Stomach (tissue), 19 donors: ENCODE measurements at regions of chr10 and their contacts with region 1.

Region 1: GRCh38 chr10:114550756-114551635 is 107.1 kb downstream of the ABLIM1 start:
- DNase-seq: peak; percentile 81 to 96
- H3K4me3 ChIP-seq: peak overlapping the region; percentile 32 to 40 (median 34)
- H3K27ac ChIP-seq: peak overlapping the region; percentile 61 to 82 (median 74)
- H3K4me1 ChIP-seq: peaks cover 19 to 42% (median 33%) of the 10 kb centered on the region in 4 donors
- H3K27me3 ChIP-seq: no peaks in the 10 kb centered on the region
- CTCF ChIP-seq: peak in 3 of 7 experiments; percentile 44 to 63 (median 62)
- EP300 ChIP-seq: no peak
- POLR2A ChIP-seq: no peak

Region 2: DNA sequence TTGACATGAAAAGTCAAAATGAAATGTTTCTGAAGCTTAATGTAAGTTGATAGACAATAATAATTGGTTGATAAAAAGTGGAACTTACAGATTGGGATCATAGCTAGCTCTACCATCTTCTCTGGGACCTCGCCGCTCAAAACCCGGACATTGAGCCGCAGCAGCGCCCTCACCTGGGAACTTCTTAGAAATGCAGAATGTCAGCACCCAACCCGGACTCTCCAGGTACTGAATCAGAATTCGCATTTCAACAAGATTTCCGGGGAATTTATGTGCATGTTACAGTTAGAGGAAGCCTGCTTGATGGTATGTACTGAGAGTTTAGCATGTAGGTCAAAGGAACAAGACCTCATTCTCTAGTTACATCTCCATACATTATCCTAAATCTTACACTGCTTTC is 143.8 kb after region 1 on chr10:
- intact Hi-C with region 1: loop called (anchors 10 kb)
- DNase-seq: peak; percentile 42 to 44
- H3K4me3 ChIP-seq: no peak overlapping the region
- H3K27ac ChIP-seq: no peak overlapping the region
- H3K4me1 ChIP-seq: peaks cover 0 to 8% (median 0%) of the 10 kb centered on the region in 4 donors
- H3K27me3 ChIP-seq: no peaks in the 10 kb centered on the region
- CTCF ChIP-seq: peak in 3 of 7 experiments; percentile 18 to 46 (median 24)
- EP300 ChIP-seq: no peak
- POLR2A ChIP-seq: no peak

Region 3: DNA sequence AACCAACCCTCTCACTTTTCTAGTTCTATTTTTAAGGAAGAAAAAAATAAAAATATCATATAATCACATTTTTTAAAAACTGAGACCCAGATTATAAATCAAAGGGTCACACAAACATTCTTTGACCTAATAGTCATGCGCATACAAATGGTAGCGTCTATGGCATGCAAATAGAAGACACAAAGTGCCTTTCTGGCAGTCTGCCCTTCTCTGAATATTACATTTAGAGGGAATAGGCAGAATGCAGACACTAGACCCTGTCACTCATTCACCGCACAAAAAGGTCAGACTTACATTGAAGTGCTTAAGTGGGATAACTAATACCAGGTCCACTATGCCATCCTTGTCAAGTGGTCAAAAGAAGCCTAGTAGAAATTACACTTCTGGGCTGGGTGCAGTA is 244.0 kb after region 1 on chr10:
- intact Hi-C with region 1: loop called (anchors 10 kb)
- DNase-seq: peak in 1 of 2 donors; percentile 34
- H3K4me3 ChIP-seq: no peak overlapping the region
- H3K27ac ChIP-seq: no peak overlapping the region
- H3K4me1 ChIP-seq: no peaks in the 10 kb centered on the region
- H3K27me3 ChIP-seq: no peaks in the 10 kb centered on the region
- CTCF ChIP-seq: no peak
- EP300 ChIP-seq: no peak
- POLR2A ChIP-seq: no peak

Region 4: DNA sequence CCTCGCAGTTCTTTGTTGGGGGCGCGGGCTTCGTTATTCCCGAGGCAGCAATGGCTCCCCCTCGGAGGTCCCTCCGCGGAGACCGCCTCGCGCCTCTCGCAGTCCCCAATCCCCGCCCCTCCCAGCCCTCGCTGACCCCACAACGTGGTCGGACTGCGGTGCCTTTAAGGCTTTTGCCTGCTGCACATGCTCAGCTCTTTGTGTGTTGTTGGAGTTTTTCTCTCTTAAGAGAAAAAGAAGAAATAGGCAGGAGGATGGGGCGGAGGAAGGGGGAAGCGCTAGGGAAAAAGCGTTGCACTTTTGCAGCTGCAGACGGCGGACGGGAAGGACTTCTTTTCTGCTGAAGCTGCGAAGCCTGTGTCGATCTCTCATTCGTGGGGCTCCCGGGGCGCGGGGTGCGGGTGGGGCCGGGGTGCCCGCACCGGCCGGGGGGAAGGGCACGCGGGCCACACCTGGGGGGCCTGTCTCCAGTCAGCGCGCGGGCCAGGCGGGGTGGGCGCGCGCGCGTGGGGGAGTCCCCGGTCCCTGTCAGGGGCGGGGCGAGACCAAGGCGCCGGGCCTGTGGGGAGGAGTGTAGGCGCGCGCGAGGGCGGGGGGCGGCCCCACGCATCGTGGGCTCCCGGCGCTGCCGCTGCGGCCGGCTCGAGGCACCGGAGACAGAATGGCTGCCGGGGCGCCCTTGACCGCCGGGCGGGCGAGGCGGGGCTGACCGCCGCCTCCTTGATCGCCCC is 541.7 kb after region 1 on chr10:
- intact Hi-C with region 1: no loop called
- DNase-seq: peak in 1 of 2 donors; percentile 77
- H3K4me3 ChIP-seq: peak overlapping the region; percentile 60 to 85 (median 68)
- H3K27ac ChIP-seq: peak overlapping the region in 2 of 5 donors; percentile 49 to 55
- H3K4me1 ChIP-seq: peaks cover 9 to 31% (median 20%) of the 10 kb centered on the region in 4 donors
- H3K27me3 ChIP-seq: peaks cover 8 to 56% (median 33%) of the 10 kb centered on the region in 3 donors
- CTCF ChIP-seq: no peak
- EP300 ChIP-seq: no peak
- POLR2A ChIP-seq: no peak